Lower leg skin (tissue), 4 donors: ENCODE measurements at regions of chr3 and their contacts with region 1.

Region 1: DNA sequence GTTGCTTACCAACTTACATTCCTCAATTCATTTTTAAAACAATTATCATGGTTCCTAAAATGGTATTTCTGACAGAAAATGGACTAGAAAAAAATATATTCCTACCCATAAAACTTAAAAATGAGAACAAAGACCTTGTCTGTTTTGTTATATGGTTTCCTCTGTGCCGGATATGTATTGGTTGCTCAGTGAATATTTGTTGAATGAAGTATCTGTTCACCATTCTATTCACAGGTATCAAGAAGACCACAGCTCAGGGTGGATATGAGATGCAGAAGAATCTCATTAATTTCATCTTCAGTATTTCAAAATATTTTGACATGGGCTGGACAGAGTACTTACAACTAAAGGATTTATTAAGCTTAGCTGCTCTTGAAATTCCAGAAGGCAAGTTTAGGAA is 58.1 kb downstream of the TUSC7 start:
- DNase-seq: no peak
- H3K4me3 ChIP-seq: no peak overlapping the region
- CTCF ChIP-seq: no peak
- POLR2A ChIP-seq: no peak

Region 2: GRCh38 chr3:116607205-116607604 is 160.5 kb before region 1 on chr3:
- intact Hi-C with region 1: loop called (anchors 10 kb)
- DNase-seq: no peak
- H3K4me3 ChIP-seq: no peak overlapping the region
- CTCF ChIP-seq: no peak
- POLR2A ChIP-seq: no peak

Region 3: GRCh38 chr3:116824208-116824607 is 56.5 kb after region 1 on chr3:
- intact Hi-C with region 1: no loop called
- DNase-seq: no peak
- H3K4me3 ChIP-seq: no peak overlapping the region
- CTCF ChIP-seq: no peak
- POLR2A ChIP-seq: no peak